IMR-90 (cell line): ENCODE measurements at regions of chr2 and their contacts with region 1.

Region 1: GRCh38 chr2:144516981-144517865 is 2.7 kb downstream of the ZEB2 start:
- DNase-seq: peak; percentile 98
- ATAC-seq: peak; percentile 60
- H3K4me3 ChIP-seq: peak overlapping the region; percentile 99
- H3K27ac ChIP-seq: peak overlapping the region; percentile 99
- H3K4me1 ChIP-seq: peaks cover 5% of the 10 kb centered on the region; the same call in 1 of the 2 replicates
- H3K27me3 ChIP-seq: no peaks in the 10 kb centered on the region
- CTCF ChIP-seq: no peak
- POLR2A ChIP-seq: no peak; the same call in none of the 2 replicates
- RAD21 ChIP-seq: peak; percentile 41

Region 2: GRCh38 chr2:143582046-143582747 is 935.0 kb before region 1 on chr2:
- CTCF ChIA-PET with region 1: no interaction called
- POLR2A ChIA-PET with region 1: no interaction called
- dilution Hi-C with region 1: no loop called
- in situ Hi-C with region 1: no loop called
- intact Hi-C with region 1: loop called (anchors 2 kb)
- DNase-seq: peak; percentile 52
- ATAC-seq: peak; percentile 85
- H3K4me3 ChIP-seq: no peak overlapping the region
- H3K27ac ChIP-seq: no peak overlapping the region
- H3K4me1 ChIP-seq: no peaks in the 10 kb centered on the region; the same call in 1 of the 2 replicates
- H3K27me3 ChIP-seq: no peaks in the 10 kb centered on the region
- CTCF ChIP-seq: peak; percentile 55
- POLR2A ChIP-seq: no peak
- RAD21 ChIP-seq: peak; percentile 63

Region 3: DNA sequence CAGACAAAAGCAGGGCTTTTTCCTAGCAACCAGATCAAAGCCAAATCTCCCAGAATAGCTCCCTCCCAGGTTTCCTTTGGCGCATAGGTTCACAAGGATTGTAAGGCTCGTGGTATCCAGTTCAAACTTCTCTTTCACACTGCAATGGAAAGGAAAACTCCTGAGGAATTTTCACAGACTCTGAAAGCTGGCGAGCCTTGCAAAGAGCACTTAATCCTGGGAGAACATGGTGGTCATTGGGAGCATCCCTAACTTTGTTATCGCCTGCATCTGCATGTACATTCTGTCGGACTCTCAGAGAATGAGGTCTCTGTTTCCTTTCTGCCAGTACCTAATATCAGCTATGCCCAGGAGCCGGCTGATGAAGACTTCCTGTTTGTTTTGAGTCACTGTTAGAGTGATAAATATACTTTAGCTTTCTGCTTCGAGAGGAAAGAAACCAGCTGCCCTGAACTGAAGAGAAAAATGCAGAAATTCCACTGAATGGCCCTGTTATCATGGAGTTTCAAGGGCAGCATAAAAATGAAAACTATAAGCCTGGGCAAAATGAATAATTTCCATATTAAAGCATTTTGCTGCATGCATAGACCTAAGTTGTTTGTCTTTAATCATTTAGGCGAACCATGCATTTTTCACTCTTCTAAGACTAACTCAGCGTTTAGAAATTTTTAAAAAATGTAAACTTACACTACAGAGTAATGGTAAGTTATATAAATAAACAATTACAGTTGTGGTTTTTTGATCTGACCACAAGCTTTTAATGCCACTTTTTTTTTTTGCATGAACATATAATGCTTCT is 79.0 kb after region 1 on chr2:
- CTCF ChIA-PET with region 1: no interaction called
- POLR2A ChIA-PET with region 1: no interaction called
- dilution Hi-C with region 1: no loop called
- in situ Hi-C with region 1: no loop called
- intact Hi-C with region 1: loop called (anchors 5 kb)
- DNase-seq: peak; percentile 69
- ATAC-seq: peak; percentile 90
- H3K4me3 ChIP-seq: peak overlapping the region; percentile 8; the same call in 1 of the 2 replicates
- H3K27ac ChIP-seq: peak overlapping the region; percentile 11; the same call in 1 of the 2 replicates
- H3K4me1 ChIP-seq: peaks cover 4% of the 10 kb centered on the region
- H3K27me3 ChIP-seq: peaks cover 33% of the 10 kb centered on the region
- CTCF ChIP-seq: no peak
- POLR2A ChIP-seq: no peak
- RAD21 ChIP-seq: no peak

Region 4: GRCh38 chr2:145022666-145023330 is 505.6 kb after region 1 on chr2:
- CTCF ChIA-PET with region 1: no interaction called
- POLR2A ChIA-PET with region 1: no interaction called
- dilution Hi-C with region 1: no loop called
- in situ Hi-C with region 1: no loop called
- intact Hi-C with region 1: loop called (anchors 5 kb)
- DNase-seq: peak; percentile 89
- ATAC-seq: peak; percentile 83
- H3K4me3 ChIP-seq: no peak overlapping the region
- H3K27ac ChIP-seq: peak overlapping the region; percentile 14; the same call in 1 of the 2 replicates
- H3K4me1 ChIP-seq: peaks cover 11% of the 10 kb centered on the region
- H3K27me3 ChIP-seq: no peaks in the 10 kb centered on the region
- CTCF ChIP-seq: no peak
- POLR2A ChIP-seq: no peak
- RAD21 ChIP-seq: 0 out of 2 replicates have a peak, but pooled peaks have one; percentile 11

Region 5: GRCh38 chr2:145344076-145344724 is 827.0 kb after region 1 on chr2:
- CTCF ChIA-PET with region 1: no interaction called
- POLR2A ChIA-PET with region 1: no interaction called
- dilution Hi-C with region 1: no loop called
- in situ Hi-C with region 1: no loop called
- intact Hi-C with region 1: loop called (anchors 10 kb)
- DNase-seq: peak; percentile 50
- ATAC-seq: no peak
- H3K4me3 ChIP-seq: no peak overlapping the region
- H3K27ac ChIP-seq: no peak overlapping the region
- H3K4me1 ChIP-seq: no peaks in the 10 kb centered on the region
- H3K27me3 ChIP-seq: no peaks in the 10 kb centered on the region
- CTCF ChIP-seq: no peak
- POLR2A ChIP-seq: no peak
- RAD21 ChIP-seq: no peak

Region 6: DNA sequence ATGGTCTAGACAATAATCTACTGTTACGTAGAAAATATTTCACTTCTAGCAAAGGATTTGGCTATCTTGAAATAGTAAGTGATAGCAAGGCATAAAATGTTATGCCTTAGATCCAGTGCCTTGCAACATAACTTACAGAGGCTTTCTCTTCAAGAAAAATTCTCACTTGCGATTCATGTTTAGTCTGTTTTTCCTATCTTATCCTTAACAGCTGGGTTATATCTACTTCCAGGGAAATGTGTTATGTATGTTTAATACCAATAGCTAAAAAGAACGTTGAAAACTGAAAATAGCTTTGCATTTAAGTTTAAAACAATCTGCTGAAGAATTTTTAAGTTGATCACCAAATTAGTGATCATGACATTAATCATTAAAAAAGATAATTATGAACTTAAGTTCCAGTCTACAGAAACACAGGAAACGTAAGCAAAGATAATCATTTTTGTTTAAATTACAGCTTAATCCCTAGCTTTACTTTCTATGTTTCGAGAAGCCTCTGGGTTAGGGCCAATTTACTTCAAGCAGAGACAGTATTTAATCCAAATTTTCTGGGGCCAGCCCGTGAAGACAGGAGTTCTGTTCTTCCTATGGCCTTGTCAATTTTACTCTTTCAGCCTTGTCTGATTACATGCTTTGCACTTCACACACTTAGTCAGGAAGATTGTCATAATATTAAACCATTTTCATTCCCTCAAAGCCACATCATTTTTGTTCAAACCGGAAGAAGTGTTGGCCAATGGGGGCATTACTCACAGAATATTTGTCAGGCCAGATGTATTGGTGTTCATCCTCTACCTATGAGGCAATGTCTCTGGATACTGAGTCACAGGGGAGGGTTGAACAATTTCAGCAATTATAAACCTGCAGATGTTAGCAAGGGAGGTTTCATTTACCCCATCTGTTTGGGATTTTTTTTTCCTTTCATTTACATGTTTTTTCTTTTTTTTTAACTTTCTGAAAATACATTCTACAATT is 1135.6 kb after region 1 on chr2:
- CTCF ChIA-PET with region 1: no interaction called
- POLR2A ChIA-PET with region 1: no interaction called
- dilution Hi-C with region 1: no loop called
- in situ Hi-C with region 1: no loop called
- intact Hi-C with region 1: loop called (anchors 5 kb)
- DNase-seq: peak; percentile 95
- ATAC-seq: peak; percentile 66
- H3K4me3 ChIP-seq: no peak overlapping the region
- H3K27ac ChIP-seq: peak overlapping the region; percentile 42; the same call in 1 of the 2 replicates
- H3K4me1 ChIP-seq: no peaks in the 10 kb centered on the region; the same call in 1 of the 2 replicates
- H3K27me3 ChIP-seq: no peaks in the 10 kb centered on the region
- CTCF ChIP-seq: no peak
- POLR2A ChIP-seq: no peak
- RAD21 ChIP-seq: no peak